Natural killer cell (primary cell): ENCODE measurements at regions of chr13 and their contacts with region 1.

Region 1: DNA sequence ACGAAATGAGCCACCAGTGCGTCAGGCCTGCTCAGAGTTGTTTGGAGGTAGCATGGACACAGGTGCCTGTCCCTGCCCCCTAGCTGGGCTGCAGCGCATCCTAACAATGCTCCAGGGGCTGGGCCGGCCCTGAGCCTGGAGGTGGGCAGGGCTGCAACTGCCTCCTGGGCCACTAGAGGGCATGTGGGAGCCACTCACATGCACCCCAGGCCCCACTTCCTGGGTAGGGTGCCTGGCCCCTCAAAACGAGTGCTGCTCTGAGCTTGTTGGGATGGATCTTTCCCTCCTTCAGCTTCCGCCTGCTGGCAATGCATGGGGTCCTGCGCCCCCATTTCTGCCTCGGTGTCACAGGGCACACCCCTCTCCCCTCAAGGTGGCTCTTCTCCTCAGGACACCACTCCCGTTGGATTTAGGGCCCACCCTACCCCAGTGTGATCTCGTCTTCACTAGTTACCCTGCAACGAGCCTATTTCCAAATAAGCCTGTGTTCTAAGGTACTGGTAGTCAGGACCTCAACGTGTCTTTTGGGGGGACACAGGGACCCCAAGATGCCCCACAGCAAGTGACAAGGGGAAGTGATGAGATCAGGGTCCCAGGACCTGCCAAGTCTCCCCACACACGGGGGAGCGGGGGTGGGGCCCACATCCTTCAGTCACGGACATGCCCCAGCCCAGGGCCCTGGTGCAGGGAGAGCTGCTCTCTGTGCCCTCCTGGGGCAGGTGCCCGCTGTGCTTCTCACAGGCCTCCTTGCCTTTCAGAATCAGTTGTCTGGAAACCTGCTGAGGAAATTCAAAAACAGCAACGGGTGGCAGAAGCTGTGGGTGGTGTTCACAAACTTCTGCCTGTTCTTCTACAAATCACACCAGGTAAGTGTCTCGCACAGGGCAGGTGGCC is 131.3 kb downstream of the STK24 start:
- DNase-seq: peak; percentile 66 to 90
- ATAC-seq: peak; percentile 95 to 100 (median 99)
- H3K4me3 ChIP-seq: no peak overlapping the region
- H3K4me3 Mint-ChIP-seq: no peak overlapping the region
- H3K27ac ChIP-seq: peak overlapping the region; percentile 51
- H3K27ac Mint-ChIP-seq: peak overlapping the region in 1 of 2 donors; percentile 21
- H3K4me1 ChIP-seq: peaks cover 11% of the 10 kb centered on the region
- H3K4me1 Mint-ChIP-seq: peaks cover 7 to 9% of the 10 kb centered on the region in 2 donors
- H3K27me3 ChIP-seq: no peaks in the 10 kb centered on the region
- H3K27me3 Mint-ChIP-seq: no peaks in the 10 kb centered on the region
- CTCF ChIP-seq: peak; percentile 97

Region 2: DNA sequence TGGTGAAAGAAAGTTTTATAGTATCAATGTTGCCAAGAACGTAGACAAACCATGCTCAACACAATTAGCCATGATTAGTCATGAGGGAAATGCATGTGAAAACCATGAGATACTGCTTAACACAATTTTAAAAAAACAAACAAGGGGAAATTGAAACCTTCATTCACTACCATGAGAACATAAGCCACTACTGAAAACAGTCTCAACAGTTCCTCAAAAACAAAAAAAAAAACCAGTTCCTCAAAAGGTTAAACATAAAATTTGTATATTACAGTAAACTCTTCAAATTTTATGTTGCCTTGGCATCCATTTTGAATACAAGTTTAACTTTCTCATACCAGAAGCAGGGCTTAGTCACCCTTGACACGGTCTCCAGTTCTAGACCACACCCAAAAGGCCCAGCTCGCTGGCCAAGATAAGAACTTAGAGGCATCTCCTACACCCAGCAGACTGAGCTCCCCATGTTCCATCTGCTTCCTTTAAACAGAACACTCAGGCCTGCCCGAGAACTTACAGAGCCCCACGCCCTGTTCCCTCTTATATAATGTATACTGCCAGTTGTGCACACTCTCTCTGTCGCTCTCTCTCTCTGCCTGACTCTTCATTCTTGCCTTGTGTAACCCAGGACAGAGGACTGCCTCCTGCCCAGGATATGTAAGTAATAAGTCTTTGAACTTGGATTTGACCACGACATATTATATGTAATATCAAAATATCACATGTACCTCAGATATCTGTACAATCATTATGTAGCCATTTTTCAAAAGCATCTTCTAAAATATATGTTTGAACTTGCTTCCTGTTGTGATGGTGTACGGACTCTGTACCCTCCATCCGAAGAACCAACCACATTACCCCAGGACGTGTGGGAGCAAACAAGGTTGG is 63.9 kb after region 1 on chr13:
- intact Hi-C with region 1: no loop called
- DNase-seq: peak in 1 of 2 donors; percentile 54
- ATAC-seq: peak; percentile 58 to 78 (median 74)
- H3K4me3 ChIP-seq: no peak overlapping the region
- H3K4me3 Mint-ChIP-seq: no peak overlapping the region
- H3K27ac ChIP-seq: peak overlapping the region; percentile 77
- H3K27ac Mint-ChIP-seq: peak overlapping the region; percentile 35 to 45
- H3K4me1 ChIP-seq: peaks cover 24% of the 10 kb centered on the region
- H3K4me1 Mint-ChIP-seq: peaks cover 39 to 70% of the 10 kb centered on the region in 2 donors
- H3K27me3 ChIP-seq: peaks cover 5% of the 10 kb centered on the region
- H3K27me3 Mint-ChIP-seq: peaks cover 8 to 20% of the 10 kb centered on the region in 2 donors
- CTCF ChIP-seq: no peak

Region 3: DNA sequence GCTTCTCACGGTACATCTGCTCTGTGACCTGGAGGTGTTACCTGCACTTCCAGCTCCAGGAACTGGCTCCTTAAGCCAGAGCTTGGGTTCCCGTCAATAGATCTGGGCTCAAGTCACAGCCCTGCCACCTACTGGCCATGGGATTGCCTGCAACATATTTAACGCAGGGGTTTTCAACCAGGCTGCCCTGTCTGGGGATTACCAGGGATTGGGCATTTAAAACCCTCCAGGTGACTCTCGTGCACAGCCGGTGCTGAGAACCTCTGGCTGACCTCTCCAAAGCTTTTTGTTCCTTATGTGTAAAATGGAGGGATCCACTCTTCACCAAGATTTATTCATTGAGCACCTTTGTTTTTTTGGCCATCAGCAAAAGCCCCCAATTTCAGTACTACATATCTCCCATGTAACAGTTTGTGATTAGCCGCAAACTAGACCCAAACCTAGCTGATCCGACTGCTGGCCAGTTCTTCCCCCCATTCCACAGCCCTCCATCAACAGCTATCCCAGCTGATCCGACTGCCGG is 207.9 kb after region 1 on chr13:
- intact Hi-C with region 1: loop called (anchors 1 kb)
- DNase-seq: peak; percentile 47 to 85
- ATAC-seq: peak; percentile 81 to 94 (median 91)
- H3K4me3 ChIP-seq: no peak overlapping the region
- H3K4me3 Mint-ChIP-seq: no peak overlapping the region
- H3K27ac ChIP-seq: no peak overlapping the region
- H3K27ac Mint-ChIP-seq: no peak overlapping the region
- H3K4me1 ChIP-seq: no peaks in the 10 kb centered on the region
- H3K4me1 Mint-ChIP-seq: peaks cover 0 to 5% of the 10 kb centered on the region in 2 donors
- H3K27me3 ChIP-seq: no peaks in the 10 kb centered on the region
- H3K27me3 Mint-ChIP-seq: peaks cover 0 to 11% of the 10 kb centered on the region in 2 donors
- CTCF ChIP-seq: peak; percentile 76

Region 4: DNA sequence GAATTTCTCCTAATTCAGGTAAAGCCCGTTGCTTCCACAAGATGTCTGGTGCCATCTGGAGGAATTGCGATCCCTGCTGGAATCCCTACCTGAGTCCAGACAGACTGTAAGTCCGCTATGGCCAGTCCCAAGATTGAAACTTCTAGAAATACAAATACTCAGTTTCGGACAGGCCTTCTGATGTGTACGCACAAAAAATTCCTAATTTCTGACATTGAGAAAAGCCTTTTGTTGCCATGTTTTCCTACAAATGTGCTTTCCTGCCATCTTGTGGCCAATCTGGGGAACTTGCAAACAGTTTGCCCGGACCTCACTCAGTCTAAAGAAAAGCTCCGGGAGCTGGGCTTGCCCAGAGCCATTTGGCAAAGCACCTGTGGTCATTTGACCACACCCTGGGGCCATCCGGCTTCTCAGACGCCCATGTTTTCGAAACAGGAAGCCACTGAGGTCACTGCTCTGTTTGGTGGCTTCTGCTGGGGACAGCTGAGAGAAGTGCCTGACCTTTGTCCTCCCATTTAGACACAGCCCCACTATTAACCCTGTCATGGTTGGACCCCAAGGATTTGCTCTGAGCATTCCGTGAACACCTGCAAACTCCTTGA is 227.5 kb after region 1 on chr13:
- intact Hi-C with region 1: loop called (anchors 1 kb)
- DNase-seq: peak; percentile 33 to 74
- ATAC-seq: peak; percentile 72 to 82 (median 80)
- H3K4me3 ChIP-seq: no peak overlapping the region
- H3K4me3 Mint-ChIP-seq: no peak overlapping the region
- H3K27ac ChIP-seq: no peak overlapping the region
- H3K27ac Mint-ChIP-seq: no peak overlapping the region
- H3K4me1 ChIP-seq: peaks cover 15% of the 10 kb centered on the region
- H3K4me1 Mint-ChIP-seq: peaks cover 15% of the 10 kb centered on the region in 2 donors
- H3K27me3 ChIP-seq: no peaks in the 10 kb centered on the region
- H3K27me3 Mint-ChIP-seq: peaks cover 11 to 20% of the 10 kb centered on the region in 2 donors
- CTCF ChIP-seq: peak; percentile 70

Region 5: DNA sequence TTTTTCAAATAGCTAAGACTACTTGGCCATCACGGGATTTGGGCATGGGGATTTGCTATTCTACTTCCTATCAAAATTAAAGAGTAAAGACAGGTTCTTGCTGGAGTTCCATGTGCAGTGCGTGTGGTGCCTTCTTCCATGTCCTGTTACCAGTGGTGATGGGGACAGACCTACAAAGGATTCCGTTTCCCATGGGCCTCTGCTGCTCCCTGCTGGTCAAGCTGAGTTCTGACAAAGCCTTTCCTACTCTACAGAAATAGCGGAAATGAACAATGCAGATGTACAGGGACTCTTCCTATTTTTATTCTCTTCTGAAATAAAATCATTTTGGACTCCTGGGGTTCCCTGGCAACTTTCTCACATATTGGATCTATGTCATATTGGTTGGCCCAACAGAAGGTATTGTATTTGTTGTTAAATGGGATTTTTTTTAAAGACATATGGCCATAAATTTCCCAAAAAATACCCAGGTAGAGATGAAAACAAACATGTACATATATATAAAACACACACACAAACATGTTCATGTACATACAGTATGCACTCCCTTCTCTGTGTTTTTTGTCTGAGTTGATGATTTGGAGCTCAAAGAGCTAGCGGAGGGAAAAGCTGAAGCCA is 397.4 kb after region 1 on chr13:
- intact Hi-C with region 1: loop called (anchors 1 kb)
- DNase-seq: peak; percentile 21 to 73
- ATAC-seq: peak; percentile 79 to 88 (median 80)
- H3K4me3 ChIP-seq: no peak overlapping the region
- H3K4me3 Mint-ChIP-seq: no peak overlapping the region
- H3K27ac ChIP-seq: no peak overlapping the region
- H3K27ac Mint-ChIP-seq: no peak overlapping the region
- H3K4me1 ChIP-seq: no peaks in the 10 kb centered on the region
- H3K4me1 Mint-ChIP-seq: peaks cover 8% of the 10 kb centered on the region in 2 donors
- H3K27me3 ChIP-seq: no peaks in the 10 kb centered on the region
- H3K27me3 Mint-ChIP-seq: no peaks in the 10 kb centered on the region
- CTCF ChIP-seq: peak; percentile 73